ENCODE measurements at regions of chr6 and their contacts with region 1.

Region 1: DNA sequence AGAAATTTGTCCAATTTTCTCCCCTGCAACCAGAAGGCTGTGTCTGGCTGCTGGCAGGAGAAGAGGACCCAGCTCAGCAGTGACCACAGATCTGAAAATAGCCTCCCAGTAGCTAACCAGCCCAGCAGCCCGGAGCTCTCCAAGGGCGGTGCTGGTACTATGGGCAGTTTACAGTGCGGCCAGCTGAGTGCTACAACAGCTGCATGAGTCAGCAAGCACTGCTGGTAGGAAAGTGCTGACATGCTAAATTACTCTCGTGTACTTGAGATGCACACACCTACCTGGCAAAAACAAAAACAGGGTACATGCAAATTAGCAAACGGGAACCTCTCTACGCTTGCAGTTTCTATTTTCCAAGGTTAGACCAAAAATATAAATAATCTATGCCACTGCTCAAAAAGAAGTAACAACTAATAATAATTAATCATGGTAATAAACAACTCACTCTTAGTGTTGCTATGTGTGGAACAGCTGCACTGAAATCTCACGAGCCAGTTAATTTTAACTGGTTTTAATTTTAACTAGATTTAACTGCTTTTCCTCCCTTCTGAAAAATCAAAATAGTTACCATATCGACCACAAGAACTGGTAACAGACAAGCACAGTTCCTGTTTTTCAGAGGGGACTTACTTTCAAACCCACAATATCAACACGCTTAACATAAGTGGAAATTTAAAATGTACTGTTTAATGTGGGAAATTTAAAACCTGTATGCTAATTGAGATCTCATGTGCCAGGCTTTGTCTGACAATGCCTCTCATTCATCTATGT is 10.8 kb downstream of the BACH2 start:
- DNase-seq: peak; percentile 80
- ATAC-seq: peak; percentile 40
- H3K4me3 Mint-ChIP-seq: peak overlapping the region; percentile 64
- H3K27ac Mint-ChIP-seq: peak overlapping the region; percentile 94
- H3K4me1 Mint-ChIP-seq: peaks cover 87% of the 10 kb centered on the region
- H3K27me3 Mint-ChIP-seq: no peaks in the 10 kb centered on the region
- CTCF ChIP-seq: no peak

Region 2: DNA sequence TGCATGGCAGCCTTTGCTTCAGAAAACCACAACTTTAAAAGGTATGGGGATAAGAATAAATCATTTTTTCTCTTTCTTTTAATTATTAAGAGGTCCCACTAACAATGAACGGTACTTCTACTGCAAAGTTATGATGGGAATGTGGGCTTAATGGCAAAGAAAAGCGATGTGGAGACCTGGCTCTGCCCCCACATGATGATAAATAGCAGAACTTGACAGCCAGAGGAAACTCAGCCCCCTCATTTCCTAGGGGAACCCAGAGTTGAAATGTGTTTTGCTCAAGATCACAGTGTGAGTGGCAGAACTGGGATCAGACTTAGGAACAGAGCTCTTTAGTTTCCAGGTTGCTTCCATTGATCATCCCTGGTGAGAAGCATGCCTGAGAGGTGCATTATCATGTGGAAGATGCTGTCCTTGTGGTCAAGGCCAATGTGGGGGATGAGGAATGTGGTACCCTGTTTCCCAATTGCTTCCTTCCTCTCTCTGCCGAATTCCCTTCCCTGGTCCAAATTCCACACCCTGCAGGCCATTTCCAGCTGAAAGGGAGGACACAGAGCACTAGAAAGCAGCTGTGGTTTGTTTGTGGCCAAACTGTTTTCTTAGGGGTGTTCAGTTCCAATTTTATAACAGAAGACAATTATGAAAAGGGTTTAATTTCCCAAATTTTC is 55.1 kb before region 1 on chr6:
- CTCF ChIA-PET with region 1: interaction called, 5 read pairs
- POLR2A ChIA-PET with region 1: interaction called, 13 read pairs
- intact Hi-C with region 1: loop called (anchors 1 kb)
- DNase-seq: peak; percentile 34
- ATAC-seq: no peak
- H3K4me3 Mint-ChIP-seq: peak overlapping the region; percentile 52
- H3K27ac Mint-ChIP-seq: peak overlapping the region; percentile 96
- H3K4me1 Mint-ChIP-seq: peaks cover 92% of the 10 kb centered on the region
- H3K27me3 Mint-ChIP-seq: no peaks in the 10 kb centered on the region
- CTCF ChIP-seq: no peak

Region 3: DNA sequence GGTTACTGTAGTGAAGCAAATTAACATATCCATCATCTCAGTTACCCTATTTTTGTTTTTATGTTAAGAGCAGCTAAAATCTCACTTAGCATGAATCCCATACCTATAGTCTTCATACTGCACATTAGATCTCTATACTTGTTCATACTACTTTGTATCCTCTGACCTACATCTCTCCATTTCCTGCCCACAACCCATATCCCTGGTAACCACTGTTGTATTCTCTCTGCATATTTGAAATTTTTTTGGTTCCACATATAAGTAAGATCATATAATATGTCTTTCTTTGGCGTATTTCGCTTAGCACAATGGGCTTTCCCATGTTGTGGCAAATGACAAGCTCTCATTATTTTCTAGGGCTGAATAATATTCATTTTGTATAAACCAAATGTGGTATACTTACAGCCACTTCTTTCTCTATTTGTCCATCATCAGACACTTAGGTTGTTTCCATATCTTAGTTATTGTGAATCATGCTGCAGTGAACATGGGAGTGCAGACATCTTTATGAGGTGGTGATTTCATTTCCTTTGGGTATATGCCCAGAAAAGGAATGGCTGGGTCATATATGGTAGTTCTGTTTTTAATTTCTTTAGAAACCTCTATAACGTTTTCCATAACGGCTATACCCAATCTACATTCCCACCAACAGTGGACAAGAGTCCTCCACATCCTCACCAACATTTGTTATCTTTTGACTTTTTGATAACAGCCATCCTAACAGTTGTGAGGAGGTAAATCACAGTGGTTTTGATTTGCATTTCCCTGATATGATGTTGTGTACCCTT is 28.9 kb before region 1 on chr6:
- CTCF ChIA-PET with region 1: no interaction called
- POLR2A ChIA-PET with region 1: interaction called, 21 read pairs
- intact Hi-C with region 1: loop called (anchors 2 kb)
- DNase-seq: peak; percentile 65
- ATAC-seq: peak; percentile 87
- H3K4me3 Mint-ChIP-seq: peak overlapping the region; percentile 5
- H3K27ac Mint-ChIP-seq: peak overlapping the region; percentile 94
- H3K4me1 Mint-ChIP-seq: peaks cover 92% of the 10 kb centered on the region
- H3K27me3 Mint-ChIP-seq: no peaks in the 10 kb centered on the region
- CTCF ChIP-seq: no peak

Region 4: DNA sequence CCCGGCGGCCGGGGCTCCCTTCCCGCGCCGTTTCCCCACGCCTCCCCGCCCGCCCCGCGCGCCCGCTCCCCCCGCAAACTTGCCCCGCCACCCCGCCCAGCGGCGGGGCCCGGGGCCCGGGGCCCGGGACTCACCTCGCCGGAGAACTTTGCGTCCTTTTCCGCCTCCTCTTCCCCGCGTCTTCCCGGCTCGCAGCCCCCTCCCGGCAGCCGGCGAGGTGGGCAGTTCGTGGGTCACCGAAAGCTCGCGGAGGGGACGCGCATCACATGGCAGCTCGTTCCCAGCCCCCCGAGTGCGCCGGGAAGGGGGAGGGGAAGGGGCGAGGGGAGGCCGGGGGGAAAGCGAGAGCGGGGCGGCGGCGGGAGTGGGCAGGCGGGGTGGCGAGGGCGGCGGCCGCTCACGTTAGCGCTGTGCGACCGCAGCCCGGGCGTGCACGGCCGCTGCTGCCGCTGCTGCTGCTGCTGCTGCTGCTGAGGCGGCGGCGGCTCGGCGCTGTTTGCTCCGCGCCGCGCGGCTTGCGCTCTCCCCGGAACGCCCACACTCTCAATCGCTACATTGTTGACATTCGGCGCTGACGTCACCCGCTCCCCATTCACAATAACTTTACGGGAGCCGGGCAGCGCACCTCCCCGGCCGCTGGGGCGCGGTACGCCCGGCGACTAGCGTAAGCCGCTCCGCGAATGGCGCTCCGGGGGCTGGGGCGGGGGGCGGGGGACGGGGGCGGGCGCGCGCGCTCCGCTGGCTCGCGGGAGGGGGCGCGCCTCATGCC is 10.7 kb after region 1 on chr6 and contains the start of gene BACH2:
- CTCF ChIA-PET with region 1: interaction called, 9 read pairs
- POLR2A ChIA-PET with region 1: interaction called, 24 read pairs
- intact Hi-C with region 1: no loop called
- DNase-seq: peak; percentile 99
- ATAC-seq: peak; percentile 69
- H3K4me3 Mint-ChIP-seq: peak within 1 kb of the TSS; percentile 83
- H3K27ac Mint-ChIP-seq: peak within 1 kb of the TSS; percentile 94
- H3K4me1 Mint-ChIP-seq: peaks cover 38% of the 10 kb centered on the region
- H3K27me3 Mint-ChIP-seq: peaks cover 3% of the 10 kb centered on the region
- CTCF ChIP-seq: no peak
- total RNA-seq, gene BACH2: 60.7 to 66.9 TPM

Region 5: GRCh38 chr6:90586836-90587638 is 301.2 kb after region 1 on chr6 and contains the start of gene MAP3K7:
- CTCF ChIA-PET with region 1: no interaction called
- POLR2A ChIA-PET with region 1: no interaction called
- intact Hi-C with region 1: loop called (anchors 10 kb)
- DNase-seq: peak; percentile 97
- ATAC-seq: peak; percentile 94
- H3K4me3 Mint-ChIP-seq: peak within 1 kb of the TSS; percentile 98
- H3K27ac Mint-ChIP-seq: peak within 1 kb of the TSS; percentile 97
- H3K4me1 Mint-ChIP-seq: peaks cover 35% of the 10 kb centered on the region
- H3K27me3 Mint-ChIP-seq: peaks cover 3% of the 10 kb centered on the region
- CTCF ChIP-seq: no peak
- total RNA-seq, gene MAP3K7: 22.1 to 22.8 TPM